HepG2 (cell line): ENCODE measurements at regions of chr10 and their contacts with region 1.

Region 1: DNA sequence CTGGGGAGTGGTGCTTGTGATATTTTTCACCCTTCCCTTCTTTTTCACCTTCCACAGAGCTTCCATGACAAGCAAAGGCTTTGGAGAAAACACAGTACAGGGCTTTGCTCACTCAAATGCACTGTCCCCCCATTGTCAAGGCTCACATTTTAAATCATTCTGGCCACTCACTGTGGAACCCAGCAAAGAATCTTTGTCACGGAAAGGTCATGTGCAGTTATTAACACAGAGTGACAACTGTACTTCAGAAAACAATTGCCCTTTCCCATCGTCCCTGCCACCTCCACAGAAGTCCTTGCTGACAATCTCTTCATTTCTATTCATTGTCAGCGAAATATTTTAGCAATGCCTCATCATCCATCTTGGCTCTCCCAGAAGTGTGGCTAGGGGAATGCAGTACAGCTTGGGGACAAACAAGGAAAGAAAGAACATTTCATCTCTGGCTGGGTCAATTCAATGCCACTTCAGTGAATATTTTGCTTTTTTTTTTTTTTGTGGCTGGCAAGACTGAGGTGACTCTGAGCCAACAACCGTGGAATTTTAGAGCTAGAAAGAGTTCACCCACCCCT is 851.0 kb downstream of the KCNMA1 start:
- DNase-seq: no peak
- ATAC-seq: no peak
- H3K4me3 ChIP-seq: no peak overlapping the region
- H3K27ac ChIP-seq: no peak overlapping the region
- H3K4me1 ChIP-seq: no peaks in the 10 kb centered on the region
- H3K27me3 ChIP-seq: no peaks in the 10 kb centered on the region
- CTCF ChIP-seq: no peak
- EP300 ChIP-seq: no peak
- POLR2A ChIP-seq: no peak
- RAD21 ChIP-seq: no peak

Region 2: GRCh38 chr10:76382381-76382851 is 404.2 kb before region 1 on chr10:
- CTCF ChIA-PET with region 1: no interaction called
- POLR2A ChIA-PET with region 1: no interaction called
- in situ Hi-C with region 1: no loop called
- intact Hi-C with region 1: loop called (anchors 5 kb)
- DNase-seq: no peak
- ATAC-seq: no peak
- H3K4me3 ChIP-seq: no peak overlapping the region
- H3K27ac ChIP-seq: no peak overlapping the region
- H3K4me1 ChIP-seq: no peaks in the 10 kb centered on the region
- H3K27me3 ChIP-seq: no peaks in the 10 kb centered on the region
- CTCF ChIP-seq: no peak
- EP300 ChIP-seq: no peak
- POLR2A ChIP-seq: no peak
- RAD21 ChIP-seq: no peak